Dorsolateral prefrontal cortex (tissue), 120 donors: ENCODE measurements at regions of chr1 and their contacts with region 1.

Region 1: GRCh38 chr1:162878000-162878596 is 17.1 kb upstream of the CCDC190 start:
- DNase-seq: peak in 8 of 10 donors; percentile 10 to 79 (median 56)
- H3K4me3 ChIP-seq: no peak overlapping the region
- H3K27ac ChIP-seq: peak overlapping the region in 1 of 59 donors; percentile 11
- H3K27me3 ChIP-seq: no peaks in the 10 kb centered on the region
- CTCF ChIP-seq: peak; percentile 31 to 87 (median 70)

Region 2: GRCh38 chr1:163321311-163322305 is 443.5 kb after region 1 on chr1 and contains the start of gene NUF2:
- intact Hi-C with region 1: loop called in 1 of 2 experiments (anchors 10 kb)
- DNase-seq: peak; percentile 93 to 97 (median 96)
- H3K4me3 ChIP-seq: peak within 1 kb of the TSS; percentile 46 to 97 (median 80)
- H3K27ac ChIP-seq: peak within 1 kb of the TSS in 56 of 59 donors; percentile 1 to 87 (median 74)
- H3K27me3 ChIP-seq: no peaks in the 10 kb centered on the region
- CTCF ChIP-seq: peak in 48 of 56 donors; percentile 15 to 69 (median 41)
- total RNA-seq, gene NUF2: 0.23 to 8.2 (median 1.2) TPM in 109 of 120 experiments, not detected in the others